Activated CD4-positive, alpha-beta T cell treated with anti-CD3 and anti-CD28 coated beads, Interleukin-2, amount 10 ng/mL, durations not matched to agents 24 days and 14 days (primary cell): ENCODE measurements at regions of chr4 and their contacts with region 1.

Region 1: DNA sequence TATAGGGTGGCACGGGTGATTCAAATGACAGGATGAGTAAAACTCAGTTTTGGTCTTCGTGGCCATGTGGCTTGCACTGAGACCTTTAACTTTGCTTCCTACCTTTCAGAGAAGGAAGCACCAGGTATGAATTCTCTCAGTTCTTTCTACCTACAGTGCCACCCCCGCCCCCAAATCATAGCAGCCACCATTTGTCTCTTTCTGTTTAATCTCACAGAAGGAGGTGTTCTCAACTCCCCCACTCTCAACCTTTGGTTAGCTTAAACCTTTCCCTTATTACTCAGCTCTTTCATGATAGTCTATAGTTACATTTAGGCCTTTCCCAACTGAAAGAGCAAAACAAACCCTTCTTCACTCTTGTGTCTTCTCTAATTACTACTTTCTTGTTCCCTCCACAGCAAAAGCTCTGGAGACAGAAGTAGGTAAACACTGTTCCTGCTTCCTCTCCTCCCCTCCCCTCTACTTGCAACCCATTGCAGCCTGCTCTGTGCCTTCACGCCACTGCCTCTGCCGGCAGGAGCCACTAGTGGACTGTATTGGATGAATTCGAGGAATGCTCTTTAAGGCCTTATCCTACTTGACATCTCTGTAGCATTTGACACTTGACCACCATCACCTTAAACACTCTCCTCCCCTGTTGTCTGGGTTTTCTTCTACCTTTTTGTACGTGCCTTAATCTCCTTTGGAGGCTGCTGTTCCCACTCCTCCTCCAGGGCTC is 123.7 kb downstream of the AFF1 start:
- DNase-seq: no peak
- H3K4me3 Mint-ChIP-seq: peak overlapping the region; percentile 39
- H3K27ac Mint-ChIP-seq: peak overlapping the region; percentile 75
- H3K4me1 Mint-ChIP-seq: peaks cover 47% of the 10 kb centered on the region
- H3K27me3 Mint-ChIP-seq: no peaks in the 10 kb centered on the region

Region 2: DNA sequence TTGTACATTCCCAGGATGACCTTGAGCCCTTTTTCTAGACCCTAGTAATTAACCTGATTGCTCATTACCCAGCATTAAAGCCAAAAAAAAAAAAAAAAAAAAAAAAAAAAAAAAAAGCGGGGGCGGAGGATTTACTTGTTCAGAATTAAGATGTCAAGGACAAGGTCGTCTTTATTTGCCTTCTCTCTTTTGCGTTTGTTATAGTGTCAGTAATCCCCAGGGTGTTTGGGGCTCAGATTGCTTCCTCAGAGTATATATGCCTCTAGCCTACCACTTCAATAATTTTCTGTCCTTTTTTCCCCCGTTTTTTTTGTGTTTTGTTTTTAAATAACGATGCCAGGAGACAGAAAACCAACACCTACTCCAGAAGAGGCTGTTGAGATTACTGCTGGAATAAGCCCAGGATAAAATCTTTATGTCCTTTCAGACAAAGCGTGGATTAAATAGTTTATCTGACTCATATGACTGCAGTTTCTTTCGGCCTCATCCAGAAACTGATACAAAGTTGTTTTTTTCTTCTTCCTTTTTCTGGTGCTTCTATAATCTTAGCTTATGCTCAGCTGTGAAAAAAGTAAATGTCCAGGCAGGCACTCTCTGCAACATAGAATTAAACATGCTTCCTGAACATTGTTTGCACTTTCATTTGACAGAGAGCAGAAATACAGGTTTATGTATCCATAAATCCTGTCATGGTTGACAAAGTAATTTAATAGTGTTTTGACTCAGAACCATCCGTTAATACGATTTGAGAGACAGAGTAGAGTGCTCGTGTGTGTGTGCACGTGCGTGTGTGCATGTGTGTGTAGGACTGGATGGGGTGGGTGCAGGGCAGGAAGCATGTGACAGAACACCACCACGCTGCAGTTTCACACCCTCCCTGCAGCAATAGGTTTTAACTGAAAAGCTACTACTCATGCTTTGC is 14.9 kb after region 1 on chr4:
- intact Hi-C with region 1: loop called (anchors 1 kb)
- DNase-seq: peak; percentile 82
- H3K4me3 Mint-ChIP-seq: peak overlapping the region; percentile 83
- H3K27ac Mint-ChIP-seq: peak overlapping the region; percentile 85
- H3K4me1 Mint-ChIP-seq: peaks cover 34% of the 10 kb centered on the region
- H3K27me3 Mint-ChIP-seq: no peaks in the 10 kb centered on the region

Region 3: GRCh38 chr4:87108142-87108546 is 49.6 kb after region 1 on chr4:
- intact Hi-C with region 1: loop called (anchors 5 kb)
- DNase-seq: no peak
- H3K4me3 Mint-ChIP-seq: no peak overlapping the region
- H3K27ac Mint-ChIP-seq: no peak overlapping the region
- H3K4me1 Mint-ChIP-seq: peaks cover 22% of the 10 kb centered on the region
- H3K27me3 Mint-ChIP-seq: no peaks in the 10 kb centered on the region